ENCODE measurements at regions of chr12 and their contacts with region 1.

Region 1: GRCh38 chr12:79935021-79935623 is at the start of gene PPP1R12A:
- DNase-seq: peak; percentile 98 to 99 (median 99)
- ATAC-seq: peak; percentile 98 to 99
- H3K4me3 ChIP-seq: peak within 1 kb of the TSS; percentile 76
- H3K27ac ChIP-seq: peak within 1 kb of the TSS; percentile 95
- H3K4me1 ChIP-seq: no peaks in the 10 kb centered on the region
- H3K27me3 ChIP-seq: no peaks in the 10 kb centered on the region
- total RNA-seq, gene PPP1R12A: 66.8 to 77.1 (median 73.4) TPM

Region 2: DNA sequence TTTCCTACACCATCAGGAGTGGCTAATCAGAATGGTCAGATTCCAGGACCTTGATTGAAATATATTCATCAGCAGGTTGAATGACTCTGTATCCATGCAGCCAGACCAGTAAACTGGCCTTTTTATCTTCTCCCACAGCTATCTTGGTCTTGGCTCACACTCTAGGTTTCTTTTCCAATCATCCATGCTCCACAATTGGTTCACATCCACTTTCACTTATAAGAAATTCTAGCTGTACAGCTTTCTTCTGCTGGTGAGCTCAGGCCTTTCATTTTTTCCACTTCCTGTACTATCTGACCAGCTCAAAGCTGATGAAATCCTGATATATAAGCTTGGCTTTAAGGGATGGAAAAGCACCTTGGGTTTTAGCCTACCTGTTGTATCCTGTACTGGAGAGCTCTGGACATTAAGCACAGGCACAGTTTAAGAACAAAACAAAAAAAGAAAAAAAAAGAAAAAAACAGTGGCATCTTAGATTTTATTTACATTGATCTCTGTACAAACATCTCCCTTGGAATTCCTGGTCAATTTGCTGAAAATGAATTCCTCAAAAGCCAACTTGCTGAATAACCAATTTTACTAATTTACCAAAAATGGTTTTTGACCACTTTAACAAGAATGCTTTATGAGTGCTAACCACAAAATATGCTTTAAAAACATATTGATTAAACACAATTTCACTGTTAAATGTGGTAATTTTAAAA is 152.8 kb before region 1 on chr12:
- intact Hi-C with region 1: loop called in 1 of 4 experiments (anchors 10 kb)
- DNase-seq: no peak
- ATAC-seq: peak; percentile 87 to 88
- H3K4me3 ChIP-seq: no peak overlapping the region
- H3K27ac ChIP-seq: no peak overlapping the region
- H3K4me1 ChIP-seq: no peaks in the 10 kb centered on the region
- H3K27me3 ChIP-seq: no peaks in the 10 kb centered on the region

Region 3: DNA sequence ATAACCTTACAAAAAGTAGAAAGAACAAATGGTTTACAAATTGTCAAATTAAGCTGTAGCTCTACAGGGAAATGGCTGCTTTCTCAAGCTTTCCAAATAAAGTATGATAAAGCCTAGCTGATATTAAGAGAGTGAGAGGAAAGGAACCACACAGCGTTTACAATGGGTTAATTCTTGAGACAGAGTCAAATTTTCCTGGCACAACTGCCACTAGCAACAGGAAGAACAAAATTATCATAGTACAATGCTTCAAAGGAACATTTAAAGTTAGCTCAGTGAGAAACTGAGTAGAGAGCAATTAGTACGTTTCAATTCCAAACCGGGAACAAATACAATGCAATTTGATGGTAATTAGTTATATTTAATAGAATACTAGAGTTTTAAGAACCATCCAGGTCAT is 116.3 kb before region 1 on chr12:
- intact Hi-C with region 1: loop called in 1 of 4 experiments (anchors 10 kb)
- DNase-seq: no peak
- ATAC-seq: peak; percentile 82 to 96
- H3K4me3 ChIP-seq: peak overlapping the region; percentile 32
- H3K27ac ChIP-seq: no peak overlapping the region
- H3K4me1 ChIP-seq: peaks cover 2% of the 10 kb centered on the region
- H3K27me3 ChIP-seq: no peaks in the 10 kb centered on the region

Region 4: GRCh38 chr12:80681287-80681686 is 746.2 kb after region 1 on chr12:
- intact Hi-C with region 1: no loop called
- DNase-seq: no peak
- ATAC-seq: no peak
- H3K4me3 ChIP-seq: no peak overlapping the region
- H3K27ac ChIP-seq: no peak overlapping the region
- H3K4me1 ChIP-seq: no peaks in the 10 kb centered on the region
- H3K27me3 ChIP-seq: no peaks in the 10 kb centered on the region

Measured in right cardiac atrium (tissue), 5 donors.